T-cell (primary cell): ENCODE measurements at regions of chr5 and their contacts with region 1.

Region 1: GRCh38 chr5:76790632-76791290 is 28.1 kb upstream of the F2RL1 start:
- DNase-seq: peak in 5 of 35 experiments; percentile 2 to 30 (median 6)
- ATAC-seq: peak; percentile 77 to 90 (median 89)
- H3K4me3 ChIP-seq: no peak overlapping the region
- H3K4me3 Mint-ChIP-seq: peak overlapping the region in 1 of 3 donors; percentile 5
- H3K27ac ChIP-seq: peak overlapping the region; percentile 29
- H3K27ac Mint-ChIP-seq: peak overlapping the region; percentile 87 to 91
- H3K4me1 ChIP-seq: peaks cover 3 to 6% of the 10 kb centered on the region in 2 experiments
- H3K4me1 Mint-ChIP-seq: peaks cover 14 to 27% (median 24%) of the 10 kb centered on the region in 3 donors
- H3K27me3 ChIP-seq: no peaks in the 10 kb centered on the region
- H3K27me3 Mint-ChIP-seq: no peaks in the 10 kb centered on the region

Region 2: DNA sequence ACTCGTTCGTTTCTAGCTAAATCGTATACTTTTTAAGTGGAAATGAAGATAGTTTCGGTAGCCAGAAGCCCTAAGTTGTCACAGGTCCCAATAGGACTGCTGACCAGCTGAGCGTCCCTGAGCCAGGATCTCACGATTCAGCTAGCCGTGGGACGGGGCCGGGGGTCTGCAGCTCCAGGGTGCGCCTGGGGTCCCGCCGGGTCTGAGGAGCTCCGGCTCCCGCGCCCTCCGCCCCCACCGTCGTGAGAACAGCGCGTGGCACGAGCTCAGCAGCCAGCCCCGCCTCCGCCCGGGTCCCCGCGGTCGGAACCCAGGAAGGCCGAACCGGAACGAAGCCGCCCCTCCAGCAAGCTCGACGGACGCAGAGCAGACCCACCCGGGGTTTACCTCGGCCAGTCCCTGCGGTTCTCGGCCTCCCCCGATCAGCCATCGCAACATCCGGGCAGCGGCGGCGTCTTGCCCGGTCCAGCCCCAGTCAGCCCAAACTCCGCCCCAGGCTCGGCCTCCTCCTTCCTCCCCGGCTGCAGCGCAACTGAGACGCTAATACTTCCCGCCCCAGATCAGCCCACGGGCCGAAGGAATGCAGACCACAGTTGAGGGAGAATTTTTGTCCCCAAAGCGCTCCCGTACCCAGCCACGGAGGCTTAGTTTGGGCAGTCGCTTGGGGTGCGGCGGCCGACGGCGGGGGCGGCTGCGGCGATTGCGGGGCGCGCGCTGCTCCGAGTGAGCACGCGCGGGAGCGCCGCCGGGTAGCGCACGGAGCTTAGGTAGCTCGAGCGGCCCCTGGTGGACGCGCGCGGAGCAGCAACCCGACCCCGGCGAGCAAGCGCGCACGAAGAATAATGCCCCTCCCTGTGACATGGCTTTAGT is 701.3 kb after region 1 on chr5 and contains the start of gene WDR41:
- CTCF ChIA-PET with region 1: interaction called in 1 of 2 experiments, 10 read pairs
- POLR2A ChIA-PET with region 1: no interaction called
- DNase-seq: peak; percentile 65 to 93 (median 81)
- ATAC-seq: peak; percentile 88 to 97 (median 91)
- H3K4me3 ChIP-seq: peak within 1 kb of the TSS; percentile 89 to 96
- H3K4me3 Mint-ChIP-seq: peak within 1 kb of the TSS; percentile 82 to 87 (median 82)
- H3K27ac ChIP-seq: peak within 1 kb of the TSS; percentile 63
- H3K27ac Mint-ChIP-seq: peak within 1 kb of the TSS; percentile 79 to 85
- H3K4me1 ChIP-seq: peaks cover 3 to 8% of the 10 kb centered on the region in 2 experiments
- H3K4me1 Mint-ChIP-seq: peaks cover 11 to 20% (median 14%) of the 10 kb centered on the region in 3 donors
- H3K27me3 ChIP-seq: no peaks in the 10 kb centered on the region
- H3K27me3 Mint-ChIP-seq: peaks cover 0 to 15% of the 10 kb centered on the region in 2 donors
- total RNA-seq, gene WDR41: 8.3 to 13.5 (median 11.7) TPM